ENCODE measurements at regions of chr15 and their contacts with region 1.

Region 1: GRCh38 chr15:58933281-58934113 is at the start of gene SLTM:
- DNase-seq: peak; percentile 92
- H3K4me3 Mint-ChIP-seq: peak within 1 kb of the TSS; percentile 93
- H3K27ac Mint-ChIP-seq: peak within 1 kb of the TSS; percentile 99
- H3K4me1 Mint-ChIP-seq: peaks cover 23% of the 10 kb centered on the region
- H3K27me3 Mint-ChIP-seq: no peaks in the 10 kb centered on the region
- total RNA-seq, gene SLTM: 52.0 to 56.0 TPM

Region 2: DNA sequence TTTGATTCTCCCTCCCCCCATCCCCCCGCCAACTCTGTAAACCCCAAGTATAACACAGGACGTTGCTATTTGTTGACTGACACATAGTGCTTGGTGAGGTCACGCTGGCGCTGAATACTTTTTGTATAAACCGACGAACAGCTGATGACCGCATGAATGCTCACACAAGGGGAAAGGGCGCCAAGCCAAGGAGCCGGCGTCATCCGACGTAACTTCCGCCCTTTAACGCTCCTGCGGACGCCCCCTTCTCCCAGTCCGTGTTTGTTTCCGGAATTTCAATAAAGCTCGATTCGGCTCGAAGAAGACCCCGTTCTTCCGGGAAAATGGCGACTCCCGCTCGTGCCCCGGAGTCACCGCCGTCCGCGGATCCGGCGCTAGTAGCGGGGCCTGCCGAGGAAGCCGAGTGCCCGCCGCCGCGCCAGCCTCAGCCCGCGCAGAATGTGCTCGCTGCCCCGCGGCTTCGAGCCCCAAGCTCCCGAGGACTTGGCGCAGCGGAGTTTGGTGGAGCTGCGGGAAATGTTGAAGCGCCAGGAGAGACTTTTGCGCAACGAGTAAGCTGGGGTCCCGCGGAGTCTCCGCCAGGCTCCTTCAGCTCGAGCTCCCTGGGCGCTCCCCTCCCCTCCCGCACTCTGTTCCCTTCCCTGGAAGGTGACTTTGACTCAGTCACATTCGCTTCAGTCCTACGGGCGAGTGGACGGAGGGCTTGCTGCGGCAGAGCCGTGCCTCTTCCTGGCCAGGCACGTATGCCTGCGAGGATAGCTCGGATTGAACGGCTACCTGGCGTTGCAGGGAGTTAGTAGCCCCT is 1226.9 kb before region 1 on chr15 and contains the start of gene POLR2M:
- CTCF ChIA-PET with region 1: no interaction called
- intact Hi-C with region 1: loop called (anchors 10 kb)
- DNase-seq: peak; percentile 98
- H3K4me3 Mint-ChIP-seq: peak within 1 kb of the TSS; percentile 90
- H3K27ac Mint-ChIP-seq: peak within 1 kb of the TSS; percentile 93
- H3K4me1 Mint-ChIP-seq: peaks cover 79% of the 10 kb centered on the region
- H3K27me3 Mint-ChIP-seq: no peaks in the 10 kb centered on the region
- total RNA-seq, gene POLR2M: 107 to 114 TPM

Region 3: GRCh38 chr15:58469432-58470353 is 463.8 kb before region 1 on chr15:
- CTCF ChIA-PET with region 1: no interaction called
- intact Hi-C with region 1: loop called (anchors 2 kb)
- DNase-seq: no peak
- H3K4me3 Mint-ChIP-seq: no peak overlapping the region
- H3K27ac Mint-ChIP-seq: no peak overlapping the region
- H3K4me1 Mint-ChIP-seq: peaks cover 42% of the 10 kb centered on the region
- H3K27me3 Mint-ChIP-seq: no peaks in the 10 kb centered on the region

Region 4: GRCh38 chr15:58770857-58771620 is 162.5 kb before region 1 on chr15 and contains the start of gene MINDY2:
- CTCF ChIA-PET with region 1: interaction called, 5 read pairs
- intact Hi-C with region 1: loop called (anchors 1 kb)
- DNase-seq: peak; percentile 95
- H3K4me3 Mint-ChIP-seq: peak within 1 kb of the TSS; percentile 92
- H3K27ac Mint-ChIP-seq: peak within 1 kb of the TSS; percentile 65
- H3K4me1 Mint-ChIP-seq: no peaks in the 10 kb centered on the region
- H3K27me3 Mint-ChIP-seq: no peaks in the 10 kb centered on the region
- total RNA-seq, gene MINDY2: 4.6 to 6.6 TPM

Region 5: DNA sequence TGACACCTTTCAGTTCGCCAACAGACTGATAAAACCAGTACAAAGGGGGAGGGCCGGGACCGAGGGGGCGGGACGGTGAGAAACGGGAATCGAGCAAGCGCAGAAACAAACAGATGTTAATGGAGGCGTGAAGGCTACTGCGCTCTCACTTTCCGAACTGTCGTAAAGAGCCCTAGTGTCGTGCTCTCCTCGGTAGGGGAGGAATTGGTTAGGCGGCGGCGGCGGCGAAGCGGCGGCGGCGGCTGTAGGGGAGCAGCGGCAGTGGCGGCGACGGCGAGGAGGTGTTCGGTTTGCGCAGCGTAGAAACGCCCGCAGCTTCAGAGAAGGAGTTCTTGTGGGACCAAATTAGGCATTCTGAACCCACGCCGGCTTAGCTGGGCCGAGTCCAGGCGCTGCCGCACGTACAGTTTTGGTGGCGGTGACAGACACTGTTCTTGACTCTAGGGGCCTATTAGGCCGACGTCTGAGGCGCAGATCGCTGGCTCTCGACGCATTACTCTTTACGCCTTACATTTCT is 54.0 kb after region 1 on chr15 and contains the start of gene RNF111:
- CTCF ChIA-PET with region 1: no interaction called
- intact Hi-C with region 1: loop called (anchors 1 kb)
- DNase-seq: peak; percentile 95
- H3K4me3 Mint-ChIP-seq: peak within 1 kb of the TSS; percentile 93
- H3K27ac Mint-ChIP-seq: peak within 1 kb of the TSS; percentile 88
- H3K4me1 Mint-ChIP-seq: peaks cover 31% of the 10 kb centered on the region
- H3K27me3 Mint-ChIP-seq: no peaks in the 10 kb centered on the region
- total RNA-seq, gene RNF111: 17.8 to 19.8 TPM

Region 6: GRCh38 chr15:59104912-59105732 is 171.6 kb after region 1 on chr15 and contains the start of gene CCNB2:
- CTCF ChIA-PET with region 1: no interaction called
- intact Hi-C with region 1: loop called (anchors 1 kb)
- DNase-seq: peak; percentile 91
- H3K4me3 Mint-ChIP-seq: peak within 1 kb of the TSS; percentile 93
- H3K27ac Mint-ChIP-seq: peak within 1 kb of the TSS; percentile 91
- H3K4me1 Mint-ChIP-seq: peaks cover 11% of the 10 kb centered on the region
- H3K27me3 Mint-ChIP-seq: no peaks in the 10 kb centered on the region
- total RNA-seq, gene CCNB2: 93.1 to 98.2 TPM

Measured in activated naive CD4-positive, alpha-beta T cell treated with anti-CD3 and anti-CD28 coated beads for 36 hours (primary cell).